Panc1 (cell line): ENCODE measurements at regions of chr9 and their contacts with region 1.

Region 1: GRCh38 chr9:35548571-35548970 is 56.5 kb upstream of the TESK1 start:
- DNase-seq: no peak
- ATAC-seq: no peak; the same call in 1 of the 2 replicates
- H3K4me3 ChIP-seq: no peak overlapping the region
- H3K27ac ChIP-seq: peak overlapping the region; percentile 5; the same call in 1 of the 2 replicates
- H3K4me1 ChIP-seq: peaks cover 13% of the 10 kb centered on the region
- H3K27me3 ChIP-seq: no peaks in the 10 kb centered on the region
- CTCF ChIP-seq: no peak

Region 2: DNA sequence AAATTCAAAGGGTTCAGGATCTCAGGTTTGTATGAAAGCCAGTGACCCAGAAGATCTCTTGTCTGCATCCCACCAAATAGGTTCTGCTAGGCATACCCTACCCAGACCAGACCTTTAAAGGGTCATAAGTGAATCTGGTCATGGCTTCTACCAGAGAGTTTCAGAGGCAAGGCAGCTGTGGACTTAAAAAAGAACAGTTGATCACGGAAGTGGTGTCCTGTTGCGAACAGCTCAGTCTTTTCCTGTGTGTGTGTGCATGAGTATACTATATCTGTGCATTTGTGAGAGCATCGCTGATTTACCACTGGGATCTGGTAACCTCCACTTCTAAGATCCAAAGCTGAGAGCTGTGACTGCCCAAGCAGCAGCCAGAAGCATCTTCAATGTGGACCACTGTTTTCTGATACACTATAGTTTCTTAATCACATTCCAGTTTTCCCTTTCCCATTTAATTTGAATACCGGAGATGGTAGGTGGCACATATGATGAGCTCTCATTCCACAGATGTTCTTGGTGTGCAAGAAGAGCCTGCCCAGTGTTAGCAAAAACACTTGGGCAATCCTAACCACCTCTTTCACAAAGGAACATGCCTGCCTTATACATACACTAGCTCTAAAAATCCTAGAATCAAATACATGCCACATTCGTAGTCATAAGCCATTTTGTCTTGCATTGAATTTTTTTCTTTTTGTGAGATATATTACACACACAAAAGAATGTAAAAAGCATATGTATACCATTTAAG is 445.6 kb after region 1 on chr9:
- CTCF ChIA-PET with region 1: no interaction called
- POLR2A ChIA-PET with region 1: interaction called, 15 read pairs
- in situ Hi-C with region 1: no loop called
- intact Hi-C with region 1: no loop called
- DNase-seq: no peak
- ATAC-seq: no peak
- H3K4me3 ChIP-seq: no peak overlapping the region
- H3K27ac ChIP-seq: no peak overlapping the region
- H3K4me1 ChIP-seq: no peaks in the 10 kb centered on the region
- H3K27me3 ChIP-seq: peaks cover 43% of the 10 kb centered on the region
- CTCF ChIP-seq: no peak